CD8-positive, alpha-beta T cell (primary cell): ENCODE measurements at regions of chr5 and their contacts with region 1.

Region 1: GRCh38 chr5:126776497-126777256 is at the start of gene LMNB1:
- DNase-seq: peak; percentile 89 to 96 (median 92)
- ATAC-seq: peak; percentile 68
- H3K4me3 ChIP-seq: peak within 1 kb of the TSS; percentile 87 to 97
- H3K4me3 Mint-ChIP-seq: peak within 1 kb of the TSS; percentile 94
- H3K27ac ChIP-seq: peak within 1 kb of the TSS; percentile 83 to 92
- H3K27ac Mint-ChIP-seq: peak within 1 kb of the TSS; percentile 96
- H3K4me1 ChIP-seq: peaks cover 28% of the 10 kb centered on the region
- H3K4me1 Mint-ChIP-seq: peaks cover 30% of the 10 kb centered on the region
- H3K27me3 ChIP-seq: no peaks in the 10 kb centered on the region
- H3K27me3 Mint-ChIP-seq: no peaks in the 10 kb centered on the region
- CTCF ChIP-seq: no peak
- total RNA-seq, gene LMNB1: 25.8 to 30.6 TPM

Region 2: GRCh38 chr5:126490167-126490940 is 286.3 kb before region 1 on chr5:
- CTCF ChIA-PET with region 1: no interaction called
- POLR2A ChIA-PET with region 1: no interaction called
- intact Hi-C with region 1: no loop called
- DNase-seq: no peak
- ATAC-seq: no peak
- H3K4me3 ChIP-seq: no peak overlapping the region
- H3K4me3 Mint-ChIP-seq: no peak overlapping the region
- H3K27ac ChIP-seq: no peak overlapping the region
- H3K27ac Mint-ChIP-seq: peak overlapping the region; percentile 73
- H3K4me1 ChIP-seq: no peaks in the 10 kb centered on the region
- H3K4me1 Mint-ChIP-seq: no peaks in the 10 kb centered on the region
- H3K27me3 ChIP-seq: no peaks in the 10 kb centered on the region
- H3K27me3 Mint-ChIP-seq: no peaks in the 10 kb centered on the region
- CTCF ChIP-seq: no peak

Region 3: GRCh38 chr5:126594676-126595485 is 181.8 kb before region 1 on chr5 and contains the start of gene ALDH7A1:
- CTCF ChIA-PET with region 1: interaction called, 8 read pairs
- POLR2A ChIA-PET with region 1: interaction called, 10 read pairs
- intact Hi-C with region 1: loop called (anchors 2 kb)
- DNase-seq: peak in 6 of 9 experiments; percentile 13 to 60 (median 43)
- ATAC-seq: peak; percentile 70
- H3K4me3 ChIP-seq: peak within 1 kb of the TSS; percentile 49 to 52
- H3K4me3 Mint-ChIP-seq: peak within 1 kb of the TSS; percentile 86
- H3K27ac ChIP-seq: no peak within 1 kb of the TSS
- H3K27ac Mint-ChIP-seq: no peak within 1 kb of the TSS
- H3K4me1 ChIP-seq: no peaks in the 10 kb centered on the region
- H3K4me1 Mint-ChIP-seq: peaks cover 10% of the 10 kb centered on the region
- H3K27me3 ChIP-seq: peaks cover 0 to 3% of the 10 kb centered on the region in 2 experiments
- H3K27me3 Mint-ChIP-seq: peaks cover 8% of the 10 kb centered on the region
- CTCF ChIP-seq: no peak
- total RNA-seq, gene ALDH7A1: 1.1 to 1.2 TPM

Region 4: GRCh38 chr5:126676195-126676624 is 100.5 kb before region 1 on chr5:
- CTCF ChIA-PET with region 1: interaction called, 221 read pairs
- POLR2A ChIA-PET with region 1: interaction called, 8 read pairs
- intact Hi-C with region 1: loop called (anchors 1 kb)
- DNase-seq: peak; percentile 34 to 84 (median 62)
- ATAC-seq: peak; percentile 97
- H3K4me3 ChIP-seq: no peak overlapping the region
- H3K4me3 Mint-ChIP-seq: no peak overlapping the region
- H3K27ac ChIP-seq: no peak overlapping the region
- H3K27ac Mint-ChIP-seq: no peak overlapping the region
- H3K4me1 ChIP-seq: no peaks in the 10 kb centered on the region
- H3K4me1 Mint-ChIP-seq: peaks cover 3% of the 10 kb centered on the region
- H3K27me3 ChIP-seq: no peaks in the 10 kb centered on the region
- H3K27me3 Mint-ChIP-seq: no peaks in the 10 kb centered on the region
- CTCF ChIP-seq: peak; percentile 85

Region 5: GRCh38 chr5:126801992-126802294 is 25.3 kb after region 1 on chr5:
- CTCF ChIA-PET with region 1: interaction called, 11 read pairs
- POLR2A ChIA-PET with region 1: no interaction called
- intact Hi-C with region 1: no loop called
- DNase-seq: peak in 2 of 9 experiments; percentile 39 to 54
- ATAC-seq: peak; percentile 62
- H3K4me3 ChIP-seq: no peak overlapping the region
- H3K4me3 Mint-ChIP-seq: no peak overlapping the region
- H3K27ac ChIP-seq: no peak overlapping the region
- H3K27ac Mint-ChIP-seq: no peak overlapping the region
- H3K4me1 ChIP-seq: no peaks in the 10 kb centered on the region
- H3K4me1 Mint-ChIP-seq: peaks cover 33% of the 10 kb centered on the region
- H3K27me3 ChIP-seq: no peaks in the 10 kb centered on the region
- H3K27me3 Mint-ChIP-seq: no peaks in the 10 kb centered on the region
- CTCF ChIP-seq: peak; percentile 36

Region 6: DNA sequence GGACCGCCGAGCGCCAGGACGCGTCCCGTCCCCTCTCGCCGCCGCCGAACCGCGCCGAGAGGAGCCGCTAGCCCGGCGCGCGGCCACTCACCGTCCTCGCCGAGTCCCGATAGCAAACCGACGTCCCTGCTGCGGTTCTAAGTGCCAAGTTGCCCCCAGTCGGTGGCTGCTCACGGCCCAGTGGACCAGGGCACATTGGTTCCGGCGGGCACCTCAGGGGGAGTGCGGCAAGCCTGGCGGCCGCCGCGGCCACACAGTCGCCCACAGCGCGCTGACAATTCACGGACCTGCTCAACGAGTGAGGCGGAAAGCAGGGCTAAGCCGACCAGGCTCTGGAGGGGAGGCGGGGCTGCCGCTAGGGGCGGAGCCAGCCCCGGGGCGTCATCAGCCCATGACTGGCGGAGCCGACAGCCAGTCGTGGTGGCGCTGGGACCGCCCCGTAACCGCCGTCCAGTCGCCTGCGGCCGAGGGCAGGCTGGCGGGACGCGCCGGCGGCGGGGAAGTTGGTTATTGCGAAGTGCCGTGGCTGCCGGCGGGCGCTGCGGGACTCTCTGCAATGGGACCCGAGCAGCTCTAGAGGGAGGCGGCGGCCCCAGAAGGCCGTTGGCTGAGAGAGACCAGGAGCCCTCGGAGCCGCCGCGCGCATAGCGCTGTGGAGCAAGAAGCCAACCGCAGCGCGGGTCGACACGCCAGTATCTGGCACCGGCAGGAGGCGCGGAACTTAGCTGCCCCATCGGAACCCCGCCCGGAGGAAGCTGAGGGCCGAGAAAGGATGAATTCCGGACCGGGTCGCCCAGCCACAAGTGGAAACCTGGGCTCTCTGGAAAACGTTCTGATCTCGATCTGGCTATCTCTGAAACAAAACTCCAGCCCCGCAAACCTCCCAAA is 253.8 kb after region 1 on chr5 and contains the start of gene MARCHF3:
- CTCF ChIA-PET with region 1: no interaction called
- POLR2A ChIA-PET with region 1: interaction called, 7 read pairs
- intact Hi-C with region 1: loop called (anchors 1 to 2 kb)
- DNase-seq: peak; percentile 86 to 96 (median 92)
- ATAC-seq: peak; percentile 95
- H3K4me3 ChIP-seq: peak within 1 kb of the TSS; percentile 81 to 87
- H3K4me3 Mint-ChIP-seq: peak within 1 kb of the TSS; percentile 93
- H3K27ac ChIP-seq: peak within 1 kb of the TSS; percentile 49 to 54
- H3K27ac Mint-ChIP-seq: peak within 1 kb of the TSS; percentile 64
- H3K4me1 ChIP-seq: peaks cover 8% of the 10 kb centered on the region
- H3K4me1 Mint-ChIP-seq: peaks cover 25% of the 10 kb centered on the region
- H3K27me3 ChIP-seq: no peaks in the 10 kb centered on the region
- H3K27me3 Mint-ChIP-seq: peaks cover 7% of the 10 kb centered on the region
- CTCF ChIP-seq: no peak
- total RNA-seq, gene MARCHF3: 7.7 to 9.7 TPM